HEK293 (cell line): ENCODE measurements at regions of chr5 and their contacts with region 1.

Region 1: GRCh38 chr5:149667084-149667828 is 62.9 kb upstream of the PPARGC1B start:
- H3K4me3 ChIP-seq: no peak overlapping the region
- H3K27ac ChIP-seq: no peak overlapping the region
- H3K4me1 ChIP-seq: no peaks in the 10 kb centered on the region
- CTCF ChIP-seq: 0 out of 2 replicates have a peak, but pooled peaks have one; percentile 20

Region 2: DNA sequence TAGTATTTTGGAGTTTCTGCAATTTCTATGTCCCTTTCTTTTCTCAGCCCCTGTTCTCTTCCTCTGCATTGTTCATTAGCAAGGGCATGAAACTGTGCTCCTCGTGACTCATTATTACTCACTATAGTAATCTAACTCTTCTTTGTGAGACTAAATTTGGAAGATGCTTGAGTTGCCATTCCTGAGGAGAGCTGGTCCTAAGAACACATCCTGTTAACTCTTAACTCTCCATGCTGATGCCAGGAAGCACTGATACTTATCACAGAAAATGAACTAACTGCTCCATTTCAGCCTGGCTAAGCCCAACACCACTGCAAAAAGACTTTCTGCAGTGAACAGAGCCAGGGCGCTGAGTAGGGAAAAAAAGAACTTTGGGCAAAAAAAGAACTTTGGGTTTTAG is 105.4 kb before region 1 on chr5:
- CTCF ChIA-PET with region 1: no interaction called
- POLR2A ChIA-PET with region 1: no interaction called
- H3K4me3 ChIP-seq: no peak overlapping the region
- H3K27ac ChIP-seq: no peak overlapping the region; the same call in 1 of the 2 replicates
- H3K4me1 ChIP-seq: peaks cover 8% of the 10 kb centered on the region; the same call in 1 of the 2 replicates
- CTCF ChIP-seq: no peak

Region 3: DNA sequence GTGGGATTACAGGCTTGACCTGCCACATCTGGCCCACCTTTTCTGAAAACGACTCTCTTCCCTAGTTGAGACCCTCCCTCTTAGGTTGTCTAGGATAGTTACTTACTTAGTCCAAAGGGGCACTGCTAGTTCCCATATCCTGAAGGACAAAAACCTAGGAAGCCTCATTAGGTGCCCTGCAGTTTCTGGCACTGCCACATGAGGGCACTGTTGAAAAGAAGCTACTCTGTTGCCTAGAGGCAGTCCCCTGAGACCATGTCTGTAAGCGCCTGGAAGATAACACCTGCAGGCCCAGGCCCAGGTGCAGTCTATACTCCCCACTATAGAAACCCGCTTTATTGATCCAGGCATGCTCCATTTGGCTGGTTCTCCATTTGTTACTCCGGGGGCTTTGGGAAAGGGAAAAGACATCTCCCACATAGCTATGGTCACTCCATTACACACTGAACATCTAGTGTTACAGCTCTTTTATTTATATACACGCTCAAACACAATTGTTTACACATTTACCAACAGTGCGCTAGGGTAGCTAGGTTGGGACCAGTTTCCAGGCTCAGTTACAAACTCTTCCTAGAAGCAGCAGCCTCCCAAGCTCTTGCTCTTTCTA is 10.6 kb before region 1 on chr5:
- CTCF ChIA-PET with region 1: interaction called, 12 read pairs
- POLR2A ChIA-PET with region 1: no interaction called
- H3K4me3 ChIP-seq: no peak overlapping the region
- H3K27ac ChIP-seq: no peak overlapping the region
- H3K4me1 ChIP-seq: no peaks in the 10 kb centered on the region
- CTCF ChIP-seq: peak; percentile 40

Region 4: DNA sequence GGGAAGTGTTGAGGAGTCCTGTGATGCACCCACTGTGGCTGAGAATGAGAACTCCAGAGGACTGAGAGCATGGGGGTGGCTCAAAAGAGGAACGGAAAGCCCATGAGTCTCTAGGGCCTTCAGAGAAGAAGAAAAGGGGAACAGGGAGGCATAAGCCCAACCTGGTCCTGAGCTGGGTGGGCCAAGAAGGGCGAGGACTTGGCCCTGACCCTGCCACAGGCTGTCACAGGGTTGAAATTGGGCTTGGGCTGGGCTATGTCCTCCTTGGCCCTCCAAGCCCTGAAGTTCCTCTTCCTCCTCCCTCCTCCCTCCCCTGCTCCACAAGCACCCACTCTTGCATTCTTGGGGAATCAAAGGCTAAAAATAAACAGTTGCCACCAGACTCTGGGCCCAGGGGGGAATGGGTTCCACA is 13.6 kb after region 1 on chr5:
- CTCF ChIA-PET with region 1: interaction called, 16 read pairs
- POLR2A ChIA-PET with region 1: no interaction called
- H3K4me3 ChIP-seq: no peak overlapping the region
- H3K27ac ChIP-seq: no peak overlapping the region
- H3K4me1 ChIP-seq: peaks cover 5% of the 10 kb centered on the region; the same call in 1 of the 2 replicates
- CTCF ChIP-seq: no peak

Region 5: GRCh38 chr5:149687486-149688168 is 20.4 kb after region 1 on chr5:
- CTCF ChIA-PET with region 1: interaction called, 16 read pairs
- POLR2A ChIA-PET with region 1: no interaction called
- H3K4me3 ChIP-seq: no peak overlapping the region
- H3K27ac ChIP-seq: no peak overlapping the region
- H3K4me1 ChIP-seq: no peaks in the 10 kb centered on the region
- CTCF ChIP-seq: no peak

Region 6: DNA sequence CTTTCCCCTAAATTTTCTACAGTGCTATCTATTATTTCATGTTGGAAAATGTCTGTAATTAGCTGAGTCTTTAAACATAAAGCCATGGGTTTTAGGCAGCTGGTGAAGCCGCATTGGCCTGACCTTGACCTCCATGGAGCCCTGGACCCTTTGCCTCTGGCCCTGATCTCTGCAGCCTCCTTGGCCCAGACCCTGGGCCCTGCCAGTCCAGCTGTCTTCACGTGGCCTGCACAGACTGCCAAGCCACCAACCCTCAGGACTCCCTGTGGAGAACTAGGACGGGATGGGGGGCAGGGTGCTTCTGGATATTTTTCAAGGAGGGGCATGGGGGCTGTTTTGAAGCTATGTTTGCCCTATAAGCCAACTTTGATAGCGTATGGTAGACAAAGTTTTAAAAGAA is 33.1 kb after region 1 on chr5:
- CTCF ChIA-PET with region 1: interaction called, 15 read pairs
- POLR2A ChIA-PET with region 1: no interaction called
- H3K4me3 ChIP-seq: no peak overlapping the region
- H3K27ac ChIP-seq: no peak overlapping the region
- H3K4me1 ChIP-seq: no peaks in the 10 kb centered on the region
- CTCF ChIP-seq: no peak

Region 7: DNA sequence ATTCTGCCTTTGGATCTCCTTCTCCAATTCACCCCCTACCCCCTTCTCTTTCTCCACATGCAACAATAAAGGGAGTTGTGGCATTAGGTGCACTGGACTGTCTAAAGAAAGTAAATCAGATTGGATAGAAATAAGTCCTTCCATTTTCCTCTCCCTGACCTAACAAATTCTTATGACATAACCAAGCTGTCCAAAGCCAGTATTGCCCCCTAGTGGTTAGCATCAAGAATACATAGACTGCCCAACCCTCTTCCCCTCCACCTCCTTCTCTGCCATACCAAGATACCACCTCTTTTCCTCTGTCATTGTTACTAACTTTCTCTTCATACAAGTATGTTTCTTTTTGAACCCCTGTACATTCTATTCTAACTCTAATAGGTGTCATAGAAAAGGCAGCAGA is 108.5 kb after region 1 on chr5:
- CTCF ChIA-PET with region 1: interaction called, 12 read pairs
- POLR2A ChIA-PET with region 1: no interaction called
- H3K4me3 ChIP-seq: no peak overlapping the region
- H3K27ac ChIP-seq: no peak overlapping the region
- H3K4me1 ChIP-seq: no peaks in the 10 kb centered on the region
- CTCF ChIP-seq: 0 out of 2 replicates have a peak, but pooled peaks have one; percentile 20

Region 8: DNA sequence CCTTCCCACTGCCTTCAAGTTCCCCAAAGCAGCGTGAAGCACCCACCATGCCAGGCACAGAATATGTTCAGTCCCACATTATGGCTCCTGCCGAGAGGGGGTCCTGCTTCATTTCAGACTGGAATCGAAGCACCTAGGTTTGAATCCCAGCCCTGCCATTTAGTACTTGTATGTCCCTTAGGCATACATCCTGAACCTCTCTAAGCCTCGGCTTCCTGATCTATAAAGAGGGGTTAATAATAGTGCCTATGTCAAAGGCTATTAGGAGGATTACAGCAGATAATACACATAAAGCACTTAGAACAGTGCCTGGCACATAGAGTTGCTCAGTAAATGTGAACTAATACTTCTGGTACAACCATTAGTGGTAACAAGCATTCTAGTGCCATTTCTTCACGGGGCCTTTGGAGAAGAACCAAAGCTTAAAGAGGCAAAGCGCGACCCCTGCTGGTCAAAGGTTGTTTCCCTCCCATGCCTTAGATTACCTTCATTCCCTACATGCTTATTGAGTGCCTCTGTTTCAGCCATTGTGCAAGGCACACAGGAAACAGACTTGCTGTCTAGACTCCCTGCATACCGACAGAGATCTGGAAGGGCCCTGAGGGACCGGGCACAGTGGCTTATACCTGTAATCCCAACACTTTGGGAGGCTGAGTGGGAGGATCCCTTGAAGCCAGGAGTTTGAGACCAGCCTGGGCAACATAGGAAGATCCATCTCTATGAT is 161.1 kb after region 1 on chr5:
- CTCF ChIA-PET with region 1: interaction called, 60 read pairs
- POLR2A ChIA-PET with region 1: no interaction called
- H3K4me3 ChIP-seq: no peak overlapping the region
- H3K27ac ChIP-seq: no peak overlapping the region
- H3K4me1 ChIP-seq: no peaks in the 10 kb centered on the region
- CTCF ChIP-seq: peak; percentile 65